Lower leg skin (tissue), 4 donors: ENCODE measurements at regions of chr6 and their contacts with region 1.

Region 1: DNA sequence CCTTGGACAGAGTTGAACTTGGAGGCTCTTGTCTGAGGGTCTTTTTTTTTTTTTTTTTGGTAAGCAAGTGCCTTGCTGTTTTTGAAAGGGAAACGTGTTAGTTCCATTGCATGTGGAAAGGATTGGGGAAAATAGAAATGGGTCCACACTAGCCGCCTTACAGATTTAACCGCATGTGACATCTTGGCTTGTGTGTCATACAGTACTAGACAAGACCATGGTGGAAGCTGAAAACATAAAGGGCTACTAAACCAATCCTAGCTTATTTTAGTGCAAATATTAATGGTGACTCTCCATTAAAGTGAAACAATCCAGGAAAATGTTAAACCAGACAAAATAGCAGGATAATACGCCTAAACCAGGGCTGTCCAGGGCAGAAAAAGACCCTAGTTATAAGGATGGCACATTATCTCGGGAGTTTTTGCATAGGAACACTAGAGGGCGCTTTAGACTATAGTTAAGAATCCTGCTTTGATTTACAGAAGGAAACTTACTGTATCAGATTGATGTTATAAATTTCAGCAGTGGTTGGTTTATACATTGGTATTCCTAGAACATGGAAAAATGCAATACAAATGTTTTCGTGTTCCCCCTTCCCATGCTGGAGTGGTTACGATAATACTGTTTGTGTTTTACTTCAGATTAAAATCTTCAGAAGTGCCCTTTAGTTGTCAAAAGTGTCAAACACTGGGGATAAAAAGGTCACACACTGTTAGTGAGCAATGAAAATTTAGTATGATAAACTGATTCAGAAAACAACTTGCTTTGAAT is 59.8 kb upstream of the DEK start:
- DNase-seq: no peak
- H3K4me3 ChIP-seq: no peak overlapping the region
- CTCF ChIP-seq: no peak
- POLR2A ChIP-seq: no peak

Region 2: GRCh38 chr6:18503593-18504231 is 179.6 kb after region 1 on chr6:
- intact Hi-C with region 1: loop called (anchors 5 kb)
- DNase-seq: peak in 1 of 2 donors; percentile 45
- H3K4me3 ChIP-seq: peak overlapping the region; percentile 1
- CTCF ChIP-seq: peak in 1 of 3 donors; percentile 65
- POLR2A ChIP-seq: no peak

Region 3: GRCh38 chr6:20070047-20070446 is 1745.9 kb after region 1 on chr6:
- intact Hi-C with region 1: loop called (anchors 5 kb)
- DNase-seq: no peak
- H3K4me3 ChIP-seq: no peak overlapping the region
- CTCF ChIP-seq: no peak
- POLR2A ChIP-seq: no peak